Calu3 (cell line): ENCODE measurements at regions of chr10 and their contacts with region 1.

Region 1: GRCh38 chr10:28991326-28992270 is 297.3 kb upstream of the LYZL1 start:
- DNase-seq: peak; percentile 74
- H3K4me3 Mint-ChIP-seq: no peak overlapping the region
- H3K27ac Mint-ChIP-seq: peak overlapping the region; percentile 45
- H3K4me1 Mint-ChIP-seq: peaks cover 19% of the 10 kb centered on the region
- H3K27me3 Mint-ChIP-seq: no peaks in the 10 kb centered on the region
- CTCF ChIP-seq: peak; percentile 65

Region 2: DNA sequence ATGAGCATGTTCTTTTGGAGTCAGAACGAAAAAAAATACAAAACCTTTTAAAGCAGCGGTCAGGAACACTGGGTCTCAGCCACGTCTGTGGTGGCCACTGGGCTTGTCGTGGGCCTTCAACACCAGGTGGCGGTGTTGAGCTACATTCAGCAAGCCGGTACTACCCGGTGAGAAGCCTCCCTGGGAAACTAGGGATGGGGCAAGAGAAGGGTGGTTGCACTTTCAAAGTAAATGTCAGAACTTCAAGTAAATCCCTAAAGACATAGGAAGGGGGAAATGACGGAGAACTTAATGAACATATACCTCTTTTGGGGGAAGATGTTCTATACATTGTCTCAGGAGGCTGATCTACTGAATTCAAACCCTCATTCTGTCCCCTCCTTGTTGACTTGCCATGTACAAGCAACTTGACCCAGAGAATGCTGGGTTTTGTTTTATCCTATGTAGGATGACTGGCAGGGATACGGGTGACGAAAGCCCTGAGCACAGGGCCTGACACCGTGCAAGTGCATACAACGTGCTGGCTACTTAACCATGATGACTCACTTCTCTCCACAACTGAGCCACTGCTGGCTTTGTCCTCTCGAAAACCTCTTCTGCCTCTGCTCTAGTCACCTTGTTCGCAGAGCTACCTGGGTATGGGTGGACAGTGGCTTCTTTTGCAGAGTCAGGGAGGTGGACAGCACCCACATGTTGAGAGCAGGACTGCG is 363.3 kb before region 1 on chr10:
- CTCF ChIA-PET with region 1: no interaction called
- intact Hi-C with region 1: loop called (anchors 1 kb)
- DNase-seq: peak; percentile 86
- H3K4me3 Mint-ChIP-seq: no peak overlapping the region
- H3K27ac Mint-ChIP-seq: no peak overlapping the region
- H3K4me1 Mint-ChIP-seq: peaks cover 21% of the 10 kb centered on the region
- H3K27me3 Mint-ChIP-seq: no peaks in the 10 kb centered on the region
- CTCF ChIP-seq: peak; percentile 89

Region 3: GRCh38 chr10:28663576-28664313 is 327.9 kb before region 1 on chr10:
- CTCF ChIA-PET with region 1: interaction called, 26 read pairs
- intact Hi-C with region 1: loop called (anchors 1 kb)
- DNase-seq: peak; percentile 80
- H3K4me3 Mint-ChIP-seq: no peak overlapping the region
- H3K27ac Mint-ChIP-seq: no peak overlapping the region
- H3K4me1 Mint-ChIP-seq: peaks cover 47% of the 10 kb centered on the region
- H3K27me3 Mint-ChIP-seq: peaks cover 10% of the 10 kb centered on the region
- CTCF ChIP-seq: peak; percentile 76

Region 4: GRCh38 chr10:28676968-28677887 is 314.4 kb before region 1 on chr10 and contains the start of gene BAMBI:
- CTCF ChIA-PET with region 1: interaction called, 17 read pairs
- intact Hi-C with region 1: no loop called
- DNase-seq: peak; percentile 97
- H3K4me3 Mint-ChIP-seq: peak within 1 kb of the TSS; percentile 88
- H3K27ac Mint-ChIP-seq: peak within 1 kb of the TSS; percentile 84
- H3K4me1 Mint-ChIP-seq: peaks cover 23% of the 10 kb centered on the region
- H3K27me3 Mint-ChIP-seq: peaks cover 13% of the 10 kb centered on the region
- CTCF ChIP-seq: peak; percentile 61
- total RNA-seq, gene BAMBI: 33.0 and 42.2 TPM in 2 replicates

Region 5: DNA sequence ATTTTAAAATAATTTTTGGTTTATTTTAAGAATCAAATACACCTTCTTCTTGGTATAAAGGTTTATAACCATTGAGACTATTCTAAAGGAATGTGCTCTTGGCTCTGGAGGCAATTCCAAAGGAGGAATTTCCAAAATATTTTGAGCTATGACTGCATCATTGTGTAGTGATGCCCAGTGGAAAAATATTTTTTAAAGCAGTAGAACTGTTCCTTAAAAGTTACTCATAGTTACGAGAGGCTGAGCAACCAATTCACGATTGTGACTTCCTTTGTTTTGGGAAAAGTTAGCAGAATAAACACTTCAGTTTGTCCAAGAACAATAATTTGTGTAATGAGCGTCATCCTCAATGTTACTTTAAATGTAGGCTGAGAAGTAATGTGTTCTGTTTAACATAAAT is 80.6 kb before region 1 on chr10:
- CTCF ChIA-PET with region 1: no interaction called
- intact Hi-C with region 1: no loop called
- DNase-seq: no peak
- H3K4me3 Mint-ChIP-seq: no peak overlapping the region
- H3K27ac Mint-ChIP-seq: no peak overlapping the region
- H3K4me1 Mint-ChIP-seq: peaks cover 32% of the 10 kb centered on the region
- H3K27me3 Mint-ChIP-seq: no peaks in the 10 kb centered on the region
- CTCF ChIP-seq: no peak